CD4-positive, alpha-beta T cell (primary cell): ENCODE measurements at regions of chr13 and their contacts with region 1.

Region 1: GRCh38 chr13:110715395-110716235 is 2.1 kb downstream of the ING1 start:
- DNase-seq: peak; percentile 88 to 100 (median 94)
- ATAC-seq: peak; percentile 57
- H3K4me3 ChIP-seq: peak overlapping the region; percentile 98
- H3K4me3 Mint-ChIP-seq: peak overlapping the region; percentile 98
- H3K27ac ChIP-seq: peak overlapping the region; percentile 64 to 89
- H3K27ac Mint-ChIP-seq: peak overlapping the region; percentile 94
- H3K4me1 ChIP-seq: peaks cover 36% of the 10 kb centered on the region
- H3K4me1 Mint-ChIP-seq: peaks cover 41% of the 10 kb centered on the region
- H3K27me3 ChIP-seq: no peaks in the 10 kb centered on the region
- H3K27me3 Mint-ChIP-seq: peaks cover 4% of the 10 kb centered on the region
- CTCF ChIP-seq: no peak

Region 2: GRCh38 chr13:110455941-110456340 is 259.7 kb before region 1 on chr13:
- CTCF ChIA-PET with region 1: no interaction called
- POLR2A ChIA-PET with region 1: no interaction called
- intact Hi-C with region 1: loop called in 1 of 2 experiments (anchors 10 kb)
- DNase-seq: peak; percentile 31 to 76 (median 47)
- ATAC-seq: peak; percentile 75
- H3K4me3 ChIP-seq: no peak overlapping the region
- H3K4me3 Mint-ChIP-seq: no peak overlapping the region
- H3K27ac ChIP-seq: no peak overlapping the region
- H3K27ac Mint-ChIP-seq: no peak overlapping the region
- H3K4me1 ChIP-seq: peaks cover 4% of the 10 kb centered on the region
- H3K4me1 Mint-ChIP-seq: peaks cover 4% of the 10 kb centered on the region
- H3K27me3 ChIP-seq: peaks cover 0 to 10% of the 10 kb centered on the region in 2 experiments
- H3K27me3 Mint-ChIP-seq: peaks cover 46% of the 10 kb centered on the region
- CTCF ChIP-seq: peak; percentile 76

Region 3: DNA sequence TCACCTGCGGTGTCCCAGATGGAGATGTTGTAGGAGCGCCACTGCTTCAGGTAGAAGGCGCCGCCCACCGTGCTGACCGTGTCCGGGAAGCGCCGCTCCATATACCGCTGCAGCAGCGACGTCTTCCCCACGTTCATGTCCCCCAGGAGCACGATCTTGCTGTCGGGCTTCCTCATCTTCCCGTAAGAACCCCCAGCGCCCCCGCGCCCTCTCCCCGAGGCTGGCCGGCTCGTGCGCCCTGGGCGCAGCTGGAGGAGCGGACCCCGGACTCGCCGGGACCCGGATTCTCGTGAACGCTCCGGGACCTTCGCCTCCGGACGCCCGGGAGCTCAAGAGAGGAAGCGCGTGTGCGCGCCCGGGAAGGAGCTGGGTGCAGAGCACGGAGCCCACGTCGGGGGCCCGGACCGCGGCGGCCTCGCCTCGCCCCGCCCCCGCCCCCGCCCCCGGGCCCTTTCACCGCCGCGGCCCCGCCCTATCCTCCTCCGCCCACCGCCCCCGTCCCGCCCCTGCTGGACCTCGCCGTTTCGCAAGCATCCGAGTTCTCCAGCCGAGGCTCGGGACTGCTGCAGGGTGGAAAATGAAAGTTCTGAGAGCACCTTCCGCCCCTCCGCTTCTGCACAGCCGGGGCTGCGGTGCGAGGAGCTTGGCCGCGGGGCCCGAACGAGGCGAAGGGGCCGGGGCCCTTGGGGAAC is 154.1 kb before region 1 on chr13 and contains the start of gene RAB20:
- CTCF ChIA-PET with region 1: no interaction called
- POLR2A ChIA-PET with region 1: interaction called, 18 read pairs
- intact Hi-C with region 1: no loop called
- DNase-seq: peak; percentile 22 to 79 (median 51)
- ATAC-seq: peak; percentile 60
- H3K4me3 ChIP-seq: peak within 1 kb of the TSS; percentile 72
- H3K4me3 Mint-ChIP-seq: peak within 1 kb of the TSS; percentile 100
- H3K27ac ChIP-seq: peak within 1 kb of the TSS; percentile 41 to 55
- H3K27ac Mint-ChIP-seq: peak within 1 kb of the TSS; percentile 77
- H3K4me1 ChIP-seq: peaks cover 17% of the 10 kb centered on the region
- H3K4me1 Mint-ChIP-seq: peaks cover 50% of the 10 kb centered on the region
- H3K27me3 ChIP-seq: no peaks in the 10 kb centered on the region
- H3K27me3 Mint-ChIP-seq: no peaks in the 10 kb centered on the region
- CTCF ChIP-seq: no peak
- total RNA-seq, gene RAB20: 0.89 to 1.4 TPM

Region 4: DNA sequence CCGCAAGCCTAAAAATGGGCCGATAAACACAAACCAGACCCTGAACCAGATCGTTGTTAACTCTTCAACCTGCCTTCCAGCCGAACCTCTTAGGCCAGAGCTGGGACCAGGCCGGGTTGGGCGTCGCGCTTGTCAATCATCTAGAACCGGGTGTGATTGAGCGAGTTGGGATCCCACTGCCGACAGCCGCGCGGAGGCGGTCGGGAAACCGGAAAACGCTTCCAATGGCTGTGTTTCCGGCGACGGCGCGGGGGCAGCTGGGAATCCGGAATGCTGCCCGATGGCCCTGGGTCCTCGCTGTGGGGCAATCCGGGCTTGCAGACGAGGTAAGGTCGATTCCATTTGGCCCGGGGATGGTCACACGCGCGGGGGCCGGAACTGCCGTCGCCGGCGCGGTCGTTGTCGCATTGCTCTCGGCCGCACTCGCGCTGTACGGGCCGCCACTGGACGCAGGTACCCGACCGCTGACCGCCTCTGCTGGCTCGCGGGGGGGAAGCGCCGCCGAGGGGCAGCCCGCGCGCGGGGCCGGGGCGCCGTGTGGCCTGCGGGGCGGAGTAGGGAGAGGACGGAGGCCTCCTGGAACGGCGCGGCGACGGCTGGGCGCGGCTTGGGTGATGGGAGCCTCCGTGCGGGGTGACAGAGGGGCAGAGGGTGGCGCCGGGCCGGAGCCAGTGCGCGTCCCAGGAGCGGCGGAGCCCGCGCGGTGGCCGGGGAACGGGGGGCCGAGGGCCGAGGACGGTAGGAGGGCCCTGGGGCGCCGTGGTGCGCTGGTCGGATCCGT is 100.1 kb before region 1 on chr13 and contains the start of gene NAXD:
- CTCF ChIA-PET with region 1: no interaction called
- POLR2A ChIA-PET with region 1: interaction called, 17 read pairs
- intact Hi-C with region 1: loop called in 1 of 2 experiments (anchors 10 kb)
- DNase-seq: peak; percentile 57 to 85 (median 67)
- ATAC-seq: peak; percentile 79
- H3K4me3 ChIP-seq: peak within 1 kb of the TSS; percentile 85
- H3K4me3 Mint-ChIP-seq: peak within 1 kb of the TSS; percentile 89
- H3K27ac ChIP-seq: peak within 1 kb of the TSS; percentile 22 to 56
- H3K27ac Mint-ChIP-seq: peak within 1 kb of the TSS; percentile 83
- H3K4me1 ChIP-seq: peaks cover 22% of the 10 kb centered on the region
- H3K4me1 Mint-ChIP-seq: peaks cover 42% of the 10 kb centered on the region
- H3K27me3 ChIP-seq: no peaks in the 10 kb centered on the region
- H3K27me3 Mint-ChIP-seq: peaks cover under 1% of the 10 kb centered on the region
- CTCF ChIP-seq: no peak
- total RNA-seq, gene NAXD: 17.4 to 17.8 TPM

Region 5: DNA sequence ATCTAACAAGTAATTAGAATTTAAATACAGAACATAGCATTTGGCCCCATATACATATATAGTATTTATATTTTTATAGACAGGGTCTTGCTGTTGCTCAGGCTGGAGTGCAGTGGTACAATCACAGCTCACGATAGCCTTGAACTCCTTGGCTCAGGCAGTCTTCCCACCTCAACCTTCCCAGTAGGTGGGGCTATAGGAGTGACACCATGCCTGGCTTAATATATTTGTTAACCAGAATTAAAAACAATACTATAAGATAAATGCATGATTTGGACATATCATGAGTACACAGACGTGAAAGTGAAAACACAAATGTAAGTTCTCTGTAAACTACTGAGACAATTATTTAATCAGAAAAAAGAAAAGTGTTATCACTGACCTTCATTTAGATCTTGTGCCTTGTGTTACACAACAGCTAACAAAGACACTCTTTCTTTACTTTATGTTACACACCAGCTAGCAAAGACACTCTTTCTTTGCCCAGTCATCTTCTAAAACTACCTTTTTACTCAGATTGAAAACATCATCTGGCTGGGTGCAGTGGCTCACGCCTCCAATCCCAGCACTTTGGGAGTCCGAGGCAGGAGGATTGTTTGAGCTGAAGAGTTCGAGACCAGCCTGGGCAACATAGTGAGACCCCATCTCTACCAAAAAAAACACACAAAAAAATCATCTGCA is 32.3 kb before region 1 on chr13:
- CTCF ChIA-PET with region 1: interaction called, 4 read pairs
- POLR2A ChIA-PET with region 1: interaction called, 9 read pairs
- intact Hi-C with region 1: loop called in 1 of 2 experiments (anchors 2 kb)
- DNase-seq: peak in 6 of 14 experiments; percentile 16 to 72 (median 39)
- ATAC-seq: peak; percentile 65
- H3K4me3 ChIP-seq: no peak overlapping the region
- H3K4me3 Mint-ChIP-seq: no peak overlapping the region
- H3K27ac ChIP-seq: no peak overlapping the region
- H3K27ac Mint-ChIP-seq: no peak overlapping the region
- H3K4me1 ChIP-seq: no peaks in the 10 kb centered on the region
- H3K4me1 Mint-ChIP-seq: no peaks in the 10 kb centered on the region
- H3K27me3 ChIP-seq: no peaks in the 10 kb centered on the region
- H3K27me3 Mint-ChIP-seq: no peaks in the 10 kb centered on the region
- CTCF ChIP-seq: peak; percentile 75

Region 6: GRCh38 chr13:110726726-110727125 is 11.1 kb after region 1 on chr13:
- CTCF ChIA-PET with region 1: no interaction called
- POLR2A ChIA-PET with region 1: interaction called, 10 read pairs
- intact Hi-C with region 1: no loop called
- DNase-seq: peak in 11 of 14 experiments; percentile 27 to 84 (median 42)
- ATAC-seq: peak; percentile 77
- H3K4me3 ChIP-seq: no peak overlapping the region
- H3K4me3 Mint-ChIP-seq: peak overlapping the region; percentile 65
- H3K27ac ChIP-seq: peak overlapping the region in 1 of 2 donors; percentile 25
- H3K27ac Mint-ChIP-seq: peak overlapping the region; percentile 83
- H3K4me1 ChIP-seq: peaks cover 26% of the 10 kb centered on the region
- H3K4me1 Mint-ChIP-seq: peaks cover 40% of the 10 kb centered on the region
- H3K27me3 ChIP-seq: no peaks in the 10 kb centered on the region
- H3K27me3 Mint-ChIP-seq: no peaks in the 10 kb centered on the region
- CTCF ChIP-seq: no peak

Region 7: DNA sequence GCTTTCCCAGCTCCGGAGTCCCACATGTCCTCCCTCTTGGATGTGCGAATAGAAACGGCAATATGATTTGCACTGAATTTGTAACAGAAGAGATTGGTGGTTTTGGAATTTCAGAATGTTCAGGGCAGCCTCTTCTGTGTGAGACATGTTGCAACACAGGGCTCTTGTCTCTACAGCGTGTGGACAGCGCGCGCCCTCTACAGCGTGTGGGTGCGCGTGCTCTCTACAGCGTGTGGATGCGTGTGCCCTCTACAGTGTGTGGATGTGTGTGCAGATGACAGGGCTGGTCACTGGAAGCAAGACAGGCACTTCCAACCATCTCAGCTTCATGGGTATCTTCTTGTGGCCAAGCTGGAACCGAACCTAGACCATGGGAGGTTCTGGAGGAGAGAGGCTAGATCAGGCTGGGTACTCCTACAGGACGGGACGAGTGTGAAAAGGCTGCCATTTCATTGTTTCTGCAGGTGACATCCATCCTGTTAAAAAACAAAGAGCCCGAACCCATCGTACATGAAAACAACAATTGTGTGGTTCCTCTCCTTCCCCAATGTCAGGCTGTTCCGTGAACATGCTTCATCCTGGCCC is 683.2 kb after region 1 on chr13:
- CTCF ChIA-PET with region 1: no interaction called
- POLR2A ChIA-PET with region 1: no interaction called
- intact Hi-C with region 1: no loop called
- DNase-seq: no peak
- ATAC-seq: no peak
- H3K4me3 ChIP-seq: no peak overlapping the region
- H3K4me3 Mint-ChIP-seq: no peak overlapping the region
- H3K27ac ChIP-seq: no peak overlapping the region
- H3K27ac Mint-ChIP-seq: no peak overlapping the region
- H3K4me1 ChIP-seq: no peaks in the 10 kb centered on the region
- H3K4me1 Mint-ChIP-seq: no peaks in the 10 kb centered on the region
- H3K27me3 ChIP-seq: no peaks in the 10 kb centered on the region
- H3K27me3 Mint-ChIP-seq: no peaks in the 10 kb centered on the region
- CTCF ChIP-seq: no peak